CD4-positive, alpha-beta memory T cell (primary cell): ENCODE measurements at regions of chr6 and their contacts with region 1.

Region 1: GRCh38 chr6:118565311-118565960 is 17.3 kb downstream of the PLN start:
- DNase-seq: peak; percentile 49 to 71 (median 58)
- H3K4me3 ChIP-seq: no peak overlapping the region
- H3K4me3 Mint-ChIP-seq: peak overlapping the region in 1 of 8 donors; percentile 58
- H3K27ac ChIP-seq: no peak overlapping the region
- H3K27ac Mint-ChIP-seq: peak overlapping the region; percentile 7 to 86 (median 64)
- H3K4me1 ChIP-seq: peaks cover 12% of the 10 kb centered on the region
- H3K4me1 Mint-ChIP-seq: peaks cover 20 to 46% (median 27%) of the 10 kb centered on the region in 4 donors
- H3K27me3 ChIP-seq: no peaks in the 10 kb centered on the region
- H3K27me3 Mint-ChIP-seq: no peaks in the 10 kb centered on the region

Region 2: GRCh38 chr6:118551063-118552053 is 14.1 kb before region 1 on chr6:
- CTCF ChIA-PET with region 1: interaction called, 13 read pairs
- POLR2A ChIA-PET with region 1: interaction called, 3 read pairs
- intact Hi-C with region 1: no loop called
- DNase-seq: peak in 4 of 5 donors; percentile 30 to 54 (median 41)
- H3K4me3 ChIP-seq: no peak overlapping the region
- H3K4me3 Mint-ChIP-seq: peak overlapping the region in 1 of 8 donors; percentile 57
- H3K27ac ChIP-seq: no peak overlapping the region
- H3K27ac Mint-ChIP-seq: peak overlapping the region in 3 of 7 donors; percentile 52 to 74 (median 72)
- H3K4me1 ChIP-seq: peaks cover 23% of the 10 kb centered on the region
- H3K4me1 Mint-ChIP-seq: peaks cover 18 to 37% (median 31%) of the 10 kb centered on the region in 4 donors
- H3K27me3 ChIP-seq: no peaks in the 10 kb centered on the region
- H3K27me3 Mint-ChIP-seq: no peaks in the 10 kb centered on the region

Region 3: DNA sequence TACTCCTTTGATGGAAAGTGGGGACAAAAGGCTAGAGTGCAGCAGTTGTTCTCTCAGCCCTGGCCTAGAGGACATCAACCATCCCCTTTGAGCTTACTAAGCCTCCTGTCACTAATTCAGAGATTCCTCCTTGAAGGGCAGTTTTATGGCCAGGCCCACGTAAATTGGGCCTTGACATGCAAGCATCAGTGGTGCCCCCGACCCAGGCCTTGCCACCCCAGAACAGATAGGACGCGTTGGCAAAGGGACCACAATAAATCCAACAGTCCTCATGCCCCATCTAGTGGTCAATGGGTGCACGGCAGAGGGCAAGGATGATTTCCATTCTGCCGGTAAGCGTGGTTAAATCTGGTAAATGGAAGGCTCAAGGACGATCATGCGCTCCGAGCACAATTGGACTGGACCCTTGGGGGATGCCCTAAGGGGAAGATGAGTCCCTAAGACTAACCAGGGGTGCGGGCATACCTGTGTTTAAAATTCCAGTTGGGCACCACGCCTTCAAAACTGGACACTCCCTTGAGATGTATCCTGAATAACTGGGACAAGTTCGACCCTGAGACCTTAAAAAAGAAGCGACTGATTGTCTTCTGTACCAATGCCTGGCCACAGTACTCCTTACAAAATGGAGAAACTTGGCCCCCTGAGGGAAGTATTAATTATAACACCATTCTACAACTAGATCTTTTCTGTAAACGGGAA is 53.4 kb after region 1 on chr6:
- CTCF ChIA-PET with region 1: interaction called, 8 read pairs
- POLR2A ChIA-PET with region 1: no interaction called
- intact Hi-C with region 1: loop called (anchors 1 kb)
- DNase-seq: peak; percentile 54 to 62 (median 57)
- H3K4me3 ChIP-seq: no peak overlapping the region
- H3K4me3 Mint-ChIP-seq: peak overlapping the region in 4 of 8 donors; percentile 8 to 59 (median 42)
- H3K27ac ChIP-seq: no peak overlapping the region
- H3K27ac Mint-ChIP-seq: peak overlapping the region in 6 of 7 donors; percentile 79 to 93 (median 84)
- H3K4me1 ChIP-seq: peaks cover 22% of the 10 kb centered on the region
- H3K4me1 Mint-ChIP-seq: peaks cover 41 to 72% (median 54%) of the 10 kb centered on the region in 4 donors
- H3K27me3 ChIP-seq: no peaks in the 10 kb centered on the region
- H3K27me3 Mint-ChIP-seq: no peaks in the 10 kb centered on the region

Region 4: GRCh38 chr6:118735320-118735719 is 169.9 kb after region 1 on chr6:
- CTCF ChIA-PET with region 1: interaction called, 7 read pairs
- POLR2A ChIA-PET with region 1: no interaction called
- intact Hi-C with region 1: loop called (anchors 2 kb)
- DNase-seq: peak in 1 of 5 donors; percentile 28
- H3K4me3 ChIP-seq: no peak overlapping the region
- H3K4me3 Mint-ChIP-seq: no peak overlapping the region
- H3K27ac ChIP-seq: no peak overlapping the region
- H3K27ac Mint-ChIP-seq: peak overlapping the region in 1 of 7 donors; percentile 22
- H3K4me1 ChIP-seq: no peaks in the 10 kb centered on the region
- H3K4me1 Mint-ChIP-seq: peaks cover 6 to 17% (median 13%) of the 10 kb centered on the region in 4 donors
- H3K27me3 ChIP-seq: no peaks in the 10 kb centered on the region
- H3K27me3 Mint-ChIP-seq: peaks cover 0 to 3% of the 10 kb centered on the region in 2 donors

Region 5: GRCh38 chr6:118800394-118801071 is 235.1 kb after region 1 on chr6:
- CTCF ChIA-PET with region 1: interaction called, 38 read pairs
- POLR2A ChIA-PET with region 1: interaction called, 5 read pairs
- intact Hi-C with region 1: loop called (anchors 1 kb)
- DNase-seq: peak; percentile 87 to 90 (median 87)
- H3K4me3 ChIP-seq: no peak overlapping the region
- H3K4me3 Mint-ChIP-seq: peak overlapping the region; percentile 52 to 86 (median 65)
- H3K27ac ChIP-seq: peak overlapping the region; percentile 11
- H3K27ac Mint-ChIP-seq: peak overlapping the region; percentile 71 to 96 (median 93)
- H3K4me1 ChIP-seq: peaks cover 30% of the 10 kb centered on the region
- H3K4me1 Mint-ChIP-seq: peaks cover 29 to 53% (median 39%) of the 10 kb centered on the region in 4 donors
- H3K27me3 ChIP-seq: no peaks in the 10 kb centered on the region
- H3K27me3 Mint-ChIP-seq: no peaks in the 10 kb centered on the region

Region 6: GRCh38 chr6:119110601-119111548 is 545.4 kb after region 1 on chr6:
- CTCF ChIA-PET with region 1: interaction called, 22 read pairs
- POLR2A ChIA-PET with region 1: interaction called, 7 read pairs
- intact Hi-C with region 1: loop called (anchors 1 kb)
- DNase-seq: peak; percentile 46 to 67 (median 65)
- H3K4me3 ChIP-seq: no peak overlapping the region
- H3K4me3 Mint-ChIP-seq: peak overlapping the region in 2 of 8 donors; percentile 13 to 27
- H3K27ac ChIP-seq: no peak overlapping the region
- H3K27ac Mint-ChIP-seq: no peak overlapping the region
- H3K4me1 ChIP-seq: no peaks in the 10 kb centered on the region
- H3K4me1 Mint-ChIP-seq: peaks cover 7 to 12% (median 9%) of the 10 kb centered on the region in 4 donors
- H3K27me3 ChIP-seq: no peaks in the 10 kb centered on the region
- H3K27me3 Mint-ChIP-seq: peaks cover 0 to 1% of the 10 kb centered on the region in 2 donors